ENCODE measurements at regions of chr2 and their contacts with region 1.

Region 1: GRCh38 chr2:209334198-209335017 is 89.4 kb upstream of the MAP2 start:
- DNase-seq: peak; percentile 63
- H3K4me3 Mint-ChIP-seq: no peak overlapping the region
- H3K27ac Mint-ChIP-seq: no peak overlapping the region
- H3K4me1 Mint-ChIP-seq: no peaks in the 10 kb centered on the region
- H3K27me3 Mint-ChIP-seq: no peaks in the 10 kb centered on the region

Region 2: GRCh38 chr2:208175069-208175839 is 1159.2 kb before region 1 on chr2:
- CTCF ChIA-PET with region 1: no interaction called
- intact Hi-C with region 1: loop called (anchors 1 kb)
- DNase-seq: peak; percentile 80
- H3K4me3 Mint-ChIP-seq: no peak overlapping the region
- H3K27ac Mint-ChIP-seq: no peak overlapping the region
- H3K4me1 Mint-ChIP-seq: peaks cover 2% of the 10 kb centered on the region
- H3K27me3 Mint-ChIP-seq: peaks cover 11% of the 10 kb centered on the region

Region 3: GRCh38 chr2:208373460-208374089 is 960.8 kb before region 1 on chr2:
- CTCF ChIA-PET with region 1: no interaction called
- intact Hi-C with region 1: loop called (anchors 2 kb)
- DNase-seq: peak; percentile 45
- H3K4me3 Mint-ChIP-seq: no peak overlapping the region
- H3K27ac Mint-ChIP-seq: no peak overlapping the region
- H3K4me1 Mint-ChIP-seq: no peaks in the 10 kb centered on the region
- H3K27me3 Mint-ChIP-seq: peaks cover 2% of the 10 kb centered on the region

Region 4: GRCh38 chr2:208466151-208466919 is 868.1 kb before region 1 on chr2:
- CTCF ChIA-PET with region 1: no interaction called
- intact Hi-C with region 1: loop called (anchors 2 kb)
- DNase-seq: peak; percentile 36
- H3K4me3 Mint-ChIP-seq: no peak overlapping the region
- H3K27ac Mint-ChIP-seq: no peak overlapping the region
- H3K4me1 Mint-ChIP-seq: no peaks in the 10 kb centered on the region
- H3K27me3 Mint-ChIP-seq: peaks cover 2% of the 10 kb centered on the region

Region 5: GRCh38 chr2:209423562-209424198 is 89.3 kb after region 1 on chr2 and contains the start of gene MAP2:
- CTCF ChIA-PET with region 1: interaction called, 13 read pairs
- intact Hi-C with region 1: loop called (anchors 1 kb)
- DNase-seq: peak; percentile 74
- H3K4me3 Mint-ChIP-seq: peak within 1 kb of the TSS; percentile 73
- H3K27ac Mint-ChIP-seq: no peak within 1 kb of the TSS
- H3K4me1 Mint-ChIP-seq: peaks cover 12% of the 10 kb centered on the region
- H3K27me3 Mint-ChIP-seq: peaks cover 42% of the 10 kb centered on the region
- total RNA-seq, gene MAP2: 0.20 to 0.67 TPM

Region 6: GRCh38 chr2:209577376-209578357 is 243.3 kb after region 1 on chr2:
- CTCF ChIA-PET with region 1: interaction called, 31 read pairs
- intact Hi-C with region 1: loop called (anchors 1 kb)
- DNase-seq: no peak
- H3K4me3 Mint-ChIP-seq: no peak overlapping the region
- H3K27ac Mint-ChIP-seq: no peak overlapping the region
- H3K4me1 Mint-ChIP-seq: peaks cover 6% of the 10 kb centered on the region
- H3K27me3 Mint-ChIP-seq: peaks cover 3% of the 10 kb centered on the region

Region 7: DNA sequence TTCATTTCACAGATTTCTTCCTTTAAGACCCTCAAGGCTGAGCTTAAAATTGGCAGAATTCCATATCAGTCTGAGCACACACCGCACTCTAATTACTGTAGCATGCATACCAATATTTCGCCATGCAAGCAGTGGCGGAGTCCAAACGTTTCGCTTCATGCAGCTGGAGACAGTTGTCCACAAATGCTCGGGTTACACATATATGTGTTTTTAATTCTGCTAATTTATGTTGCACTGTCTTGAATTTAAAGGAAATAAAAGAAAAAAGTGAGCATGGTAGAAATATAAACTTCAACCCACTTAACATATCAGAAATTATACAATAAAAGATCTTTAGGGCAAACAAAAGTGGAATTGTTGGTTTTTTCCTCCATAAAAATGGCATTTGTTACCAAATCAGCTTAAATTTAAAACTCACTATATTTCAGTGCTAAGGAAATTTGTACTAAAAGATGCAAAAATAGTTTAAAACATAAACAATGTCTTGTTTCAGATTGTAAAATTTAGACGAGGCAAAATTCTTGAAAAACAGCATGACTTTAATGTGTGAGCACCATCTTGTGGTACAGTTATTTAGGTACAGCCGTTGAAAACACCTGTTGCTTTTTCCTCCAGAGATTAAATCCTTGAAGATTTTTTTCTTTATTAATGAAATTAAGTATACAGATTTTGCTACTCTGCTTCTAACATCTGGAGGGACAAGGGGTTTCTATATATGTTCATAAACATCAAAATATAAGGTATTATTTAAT is 860.9 kb after region 1 on chr2:
- CTCF ChIA-PET with region 1: interaction called, 5 read pairs
- intact Hi-C with region 1: loop called (anchors 1 kb)
- DNase-seq: no peak
- H3K4me3 Mint-ChIP-seq: no peak overlapping the region
- H3K27ac Mint-ChIP-seq: no peak overlapping the region
- H3K4me1 Mint-ChIP-seq: peaks cover 2% of the 10 kb centered on the region
- H3K27me3 Mint-ChIP-seq: no peaks in the 10 kb centered on the region